PC-9 (cell line): ENCODE measurements at regions of chr4 and their contacts with region 1.

Region 1: GRCh38 chr4:77240469-77241066 is 83.6 kb downstream of the CCNG2 start:
- DNase-seq: peak; percentile 35 to 37
- H3K4me3 ChIP-seq: no peak overlapping the region
- H3K27ac ChIP-seq: no peak overlapping the region
- H3K4me1 ChIP-seq: no peaks in the 10 kb centered on the region
- H3K27me3 ChIP-seq: no peaks in the 10 kb centered on the region
- CTCF ChIP-seq: peak; percentile 77

Region 2: DNA sequence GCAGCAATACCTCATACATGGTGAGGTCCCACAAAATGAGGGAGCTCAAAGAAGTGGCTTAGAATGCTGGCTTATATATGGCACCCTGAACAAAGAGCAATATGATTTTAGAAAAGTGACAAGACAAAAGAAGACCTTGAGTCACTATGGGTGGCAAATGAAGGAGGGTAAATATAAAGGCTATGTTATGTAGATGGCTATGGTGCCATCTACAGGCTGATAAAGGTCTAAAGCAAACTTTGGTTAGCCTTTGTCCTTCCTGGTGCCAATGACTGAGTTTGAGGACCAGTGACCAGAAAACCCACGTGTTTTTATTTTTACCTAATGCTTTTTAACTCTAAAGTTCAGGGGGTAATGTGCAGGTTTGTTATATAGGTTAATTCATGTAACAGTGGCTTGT is 68.3 kb after region 1 on chr4:
- CTCF ChIA-PET with region 1: no interaction called
- POLR2A ChIA-PET with region 1: no interaction called
- intact Hi-C with region 1: loop called (anchors 5 kb)
- DNase-seq: no peak
- H3K4me3 ChIP-seq: no peak overlapping the region
- H3K27ac ChIP-seq: no peak overlapping the region
- H3K4me1 ChIP-seq: no peaks in the 10 kb centered on the region
- H3K27me3 ChIP-seq: no peaks in the 10 kb centered on the region
- CTCF ChIP-seq: peak; percentile 70

Region 3: GRCh38 chr4:77358315-77358928 is 117.9 kb after region 1 on chr4:
- CTCF ChIA-PET with region 1: no interaction called
- POLR2A ChIA-PET with region 1: no interaction called
- intact Hi-C with region 1: loop called (anchors 2 kb)
- DNase-seq: peak in 1 of 2 experiments; percentile 6
- H3K4me3 ChIP-seq: no peak overlapping the region
- H3K27ac ChIP-seq: no peak overlapping the region
- H3K4me1 ChIP-seq: no peaks in the 10 kb centered on the region
- H3K27me3 ChIP-seq: no peaks in the 10 kb centered on the region
- CTCF ChIP-seq: peak; percentile 72

Region 4: GRCh38 chr4:77669946-77670590 is 429.5 kb after region 1 on chr4:
- CTCF ChIA-PET with region 1: interaction called, 12 read pairs
- POLR2A ChIA-PET with region 1: no interaction called
- intact Hi-C with region 1: no loop called
- DNase-seq: no peak
- H3K4me3 ChIP-seq: no peak overlapping the region
- H3K27ac ChIP-seq: no peak overlapping the region
- H3K4me1 ChIP-seq: peaks cover 7% of the 10 kb centered on the region; the same call in 1 of the 2 replicates
- H3K27me3 ChIP-seq: no peaks in the 10 kb centered on the region
- CTCF ChIP-seq: no peak